ENCODE measurements at regions of chr12 and their contacts with region 1.

Region 1: DNA sequence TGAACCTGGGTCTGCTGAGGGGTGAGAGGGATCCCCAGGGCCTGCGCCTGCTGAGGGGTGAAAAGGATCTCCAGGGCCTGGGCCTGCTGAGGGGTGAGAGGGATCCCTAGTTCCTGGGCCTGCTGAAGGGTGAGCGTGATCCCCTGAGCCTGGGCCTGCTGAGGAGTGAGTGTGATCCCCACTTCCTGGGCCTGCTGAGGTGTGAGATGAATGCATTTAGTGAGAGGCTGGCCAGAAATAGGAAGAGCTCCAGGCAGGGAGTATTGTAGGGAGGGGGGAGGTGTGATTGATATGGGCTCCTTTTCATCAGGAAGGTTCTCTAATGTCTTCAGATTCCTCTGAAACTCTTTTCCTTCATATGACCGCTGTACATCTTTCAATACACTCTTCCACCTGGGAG is 43.0 kb downstream of the FAM186A start:
- DNase-seq: no peak
- H3K4me3 ChIP-seq: no peak overlapping the region
- H3K27me3 ChIP-seq: peaks cover 1% of the 10 kb centered on the region; the same call in 1 of the 2 replicates
- CTCF ChIP-seq: no peak

Region 2: DNA sequence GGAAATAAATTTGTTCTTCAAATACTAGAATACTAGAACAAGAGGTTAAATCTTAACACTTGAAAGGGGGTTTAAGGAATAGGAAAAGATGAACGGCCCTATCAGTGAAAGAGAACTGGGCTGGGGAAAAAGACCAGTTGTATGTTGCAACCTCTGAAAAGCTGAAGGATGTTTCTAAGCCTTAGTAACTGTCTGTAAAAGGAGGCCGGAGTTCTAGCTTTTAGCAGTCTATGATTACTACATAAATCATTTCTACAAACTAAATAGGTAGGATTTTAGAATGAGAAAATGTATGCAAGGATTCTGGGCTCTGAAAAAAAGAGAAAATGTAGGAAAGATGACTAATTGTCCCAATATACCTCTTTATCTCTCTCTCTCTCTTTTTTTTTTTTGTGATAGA is 191.2 kb before region 1 on chr12:
- CTCF ChIA-PET with region 1: no interaction called
- POLR2A ChIA-PET with region 1: interaction called, 11 read pairs
- DNase-seq: no peak
- H3K4me3 ChIP-seq: no peak overlapping the region
- H3K27me3 ChIP-seq: no peaks in the 10 kb centered on the region
- CTCF ChIP-seq: no peak

Region 3: DNA sequence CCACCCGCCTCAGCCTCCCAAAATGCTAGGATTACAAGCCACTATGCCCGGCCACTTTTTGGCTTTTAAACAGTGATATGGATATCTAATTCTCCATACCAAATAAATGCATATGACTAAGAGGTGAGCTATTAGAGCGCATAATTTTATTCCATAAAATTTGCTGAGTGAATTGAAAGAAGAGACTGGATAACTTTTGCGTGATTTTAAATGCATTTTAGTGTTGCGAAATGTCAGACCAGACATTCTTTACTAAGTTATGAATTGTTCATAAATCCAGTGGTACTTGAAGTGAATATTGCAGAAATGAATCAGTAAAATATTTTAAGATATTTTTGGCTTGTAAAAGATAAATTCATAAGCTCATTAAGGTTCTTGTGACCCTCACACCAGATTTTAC is 100.5 kb after region 1 on chr12:
- CTCF ChIA-PET with region 1: no interaction called
- POLR2A ChIA-PET with region 1: no interaction called
- DNase-seq: no peak
- H3K4me3 ChIP-seq: no peak overlapping the region
- H3K27me3 ChIP-seq: no peaks in the 10 kb centered on the region
- CTCF ChIP-seq: no peak

Region 4: GRCh38 chr12:50467439-50467838 is 114.0 kb after region 1 on chr12:
- CTCF ChIA-PET with region 1: no interaction called
- POLR2A ChIA-PET with region 1: no interaction called
- DNase-seq: no peak
- H3K4me3 ChIP-seq: no peak overlapping the region
- H3K27me3 ChIP-seq: no peaks in the 10 kb centered on the region
- CTCF ChIP-seq: no peak